ENCODE measurements at regions of chr11 and their contacts with region 1.

Region 1: GRCh38 chr11:15819679-15820286 is 536.6 kb downstream of the SOX6 start:
- H3K4me3 ChIP-seq: no peak overlapping the region
- H3K27ac ChIP-seq: no peak overlapping the region
- H3K4me1 ChIP-seq: no peaks in the 10 kb centered on the region
- CTCF ChIP-seq: peak; percentile 36; the same call in 1 of the 2 replicates

Region 2: DNA sequence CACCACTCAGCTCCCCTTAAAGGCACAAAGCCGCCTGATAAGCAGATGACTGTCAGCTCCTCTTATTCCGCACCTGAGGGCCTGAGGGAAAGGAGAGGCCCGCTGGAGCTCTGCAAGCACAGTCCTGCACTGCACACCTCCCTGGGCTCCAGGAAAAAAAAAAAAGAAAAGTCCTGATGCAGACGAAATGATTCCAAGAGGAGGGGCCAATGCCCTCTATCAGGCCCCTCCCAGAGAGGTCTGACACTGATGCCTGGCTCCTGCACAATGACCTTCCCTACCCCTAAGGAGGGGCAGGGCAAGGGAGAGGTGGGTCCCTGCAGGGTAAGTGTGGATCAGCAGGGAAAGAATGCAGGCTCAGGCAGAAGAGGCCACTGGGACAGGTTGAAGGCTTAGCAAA is 36.2 kb before region 1 on chr11:
- CTCF ChIA-PET with region 1: interaction called, 11 read pairs
- POLR2A ChIA-PET with region 1: no interaction called
- H3K4me3 ChIP-seq: no peak overlapping the region
- H3K27ac ChIP-seq: no peak overlapping the region
- H3K4me1 ChIP-seq: no peaks in the 10 kb centered on the region
- CTCF ChIP-seq: no peak

Region 3: DNA sequence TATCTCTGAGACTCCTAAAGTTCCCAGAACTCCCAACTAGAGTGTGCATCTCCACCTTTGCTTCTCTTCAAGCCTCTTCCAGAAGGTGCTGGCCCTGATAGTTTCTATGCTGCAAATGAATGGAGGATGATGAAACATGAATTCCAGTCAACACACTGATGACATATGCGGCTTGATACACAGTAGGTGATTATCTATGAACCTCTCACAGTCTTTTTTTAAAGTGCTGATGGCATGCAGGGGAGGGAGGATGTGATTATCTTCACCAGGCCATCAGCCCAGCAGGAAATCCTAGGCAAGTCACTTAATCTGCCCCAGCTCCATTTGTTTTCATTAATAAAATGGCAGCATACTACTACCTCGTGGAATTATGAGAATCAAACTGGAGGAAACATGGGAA is 12.0 kb before region 1 on chr11:
- CTCF ChIA-PET with region 1: interaction called, 11 read pairs
- POLR2A ChIA-PET with region 1: no interaction called
- H3K4me3 ChIP-seq: no peak overlapping the region
- H3K27ac ChIP-seq: no peak overlapping the region
- H3K4me1 ChIP-seq: no peaks in the 10 kb centered on the region
- CTCF ChIP-seq: no peak

Measured in HEK293 (cell line).